Natural killer cell (primary cell): ENCODE measurements at regions of chrX and their contacts with region 1.

Region 1: GRCh38 chrX:51144852-51145442 is 187.7 kb upstream of the NUDT10 start:
- DNase-seq: peak in 1 of 2 donors; percentile 44
- ATAC-seq: peak in 1 of 3 donors; percentile 60
- H3K4me3 ChIP-seq: no peak overlapping the region
- H3K4me3 Mint-ChIP-seq: no peak overlapping the region
- H3K27ac ChIP-seq: no peak overlapping the region
- H3K27ac Mint-ChIP-seq: no peak overlapping the region
- H3K4me1 ChIP-seq: no peaks in the 10 kb centered on the region
- H3K4me1 Mint-ChIP-seq: no peaks in the 10 kb centered on the region
- H3K27me3 ChIP-seq: no peaks in the 10 kb centered on the region
- H3K27me3 Mint-ChIP-seq: peaks cover 0 to 61% of the 10 kb centered on the region in 2 donors
- CTCF ChIP-seq: peak; percentile 49

Region 2: DNA sequence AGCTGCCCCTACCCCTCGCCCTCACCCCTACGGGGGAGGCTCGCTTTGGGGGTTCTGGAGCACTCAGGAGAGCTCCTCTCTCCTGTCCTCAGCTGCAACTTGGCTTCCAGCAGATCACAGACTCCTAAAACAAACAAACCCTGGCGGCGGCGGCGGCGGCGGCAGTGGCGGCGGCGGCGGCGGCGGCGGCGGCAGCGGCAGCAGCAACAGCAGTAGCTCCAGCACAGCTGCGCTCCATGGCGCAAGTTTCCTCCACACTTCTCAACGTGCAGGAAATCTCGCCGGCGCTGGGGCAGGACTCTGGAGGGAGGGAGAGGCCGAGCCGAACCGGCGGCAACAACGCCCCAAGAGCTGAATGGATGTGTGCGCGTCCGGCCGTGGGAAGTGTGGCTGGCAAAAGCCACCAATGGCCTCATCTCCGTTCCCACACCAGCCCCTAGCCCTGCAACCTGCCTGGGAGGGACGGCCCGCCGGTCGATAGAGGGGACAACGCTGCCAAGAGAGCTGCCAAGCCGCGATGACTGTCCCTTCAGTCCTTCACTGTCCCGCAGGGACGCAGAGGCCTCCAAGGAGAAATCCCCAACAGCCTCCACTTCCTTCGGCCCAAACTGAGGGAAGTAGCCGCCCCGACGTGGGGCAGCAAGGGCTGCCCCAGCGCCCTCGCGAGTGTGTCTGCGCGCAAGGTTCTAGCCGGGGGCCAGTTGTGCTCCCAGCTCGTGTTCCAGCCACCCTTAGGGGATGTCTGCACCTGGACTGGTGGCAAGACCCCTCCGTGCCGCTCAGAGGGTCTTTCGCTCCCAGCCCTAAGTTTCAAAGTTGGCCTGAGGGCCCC is 331.7 kb before region 1 on chrX:
- intact Hi-C with region 1: no loop called
- DNase-seq: no peak
- ATAC-seq: no peak
- H3K4me3 ChIP-seq: no peak overlapping the region
- H3K4me3 Mint-ChIP-seq: no peak overlapping the region
- H3K27ac ChIP-seq: no peak overlapping the region
- H3K27ac Mint-ChIP-seq: no peak overlapping the region
- H3K4me1 ChIP-seq: peaks cover 13% of the 10 kb centered on the region
- H3K4me1 Mint-ChIP-seq: no peaks in the 10 kb centered on the region
- H3K27me3 ChIP-seq: no peaks in the 10 kb centered on the region
- H3K27me3 Mint-ChIP-seq: peaks cover 20 to 60% of the 10 kb centered on the region in 2 donors
- CTCF ChIP-seq: no peak

Region 3: DNA sequence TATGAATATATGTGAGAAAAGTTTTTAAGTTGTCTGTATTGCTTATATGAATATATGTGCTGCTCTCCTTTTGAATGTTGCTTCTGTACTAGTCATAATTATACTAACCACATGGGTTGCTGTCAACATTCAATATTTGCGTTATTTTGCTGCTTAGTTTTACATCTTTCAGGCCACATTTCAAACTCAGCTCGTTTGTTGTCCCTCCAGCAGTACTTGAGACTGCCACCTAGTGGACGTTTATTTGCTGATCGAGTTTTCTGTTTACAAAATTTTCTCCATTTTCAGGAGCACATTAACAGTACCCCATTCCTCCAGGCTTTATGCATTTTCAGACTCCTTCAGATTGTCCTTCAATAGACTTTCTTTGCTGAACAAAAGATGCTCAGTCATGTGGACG is 275.7 kb after region 1 on chrX:
- intact Hi-C with region 1: loop called (anchors 10 kb)
- DNase-seq: peak in 1 of 2 donors; percentile 71
- ATAC-seq: peak in 1 of 3 donors; percentile 48
- H3K4me3 ChIP-seq: no peak overlapping the region
- H3K4me3 Mint-ChIP-seq: no peak overlapping the region
- H3K27ac ChIP-seq: no peak overlapping the region
- H3K27ac Mint-ChIP-seq: no peak overlapping the region
- H3K4me1 ChIP-seq: no peaks in the 10 kb centered on the region
- H3K4me1 Mint-ChIP-seq: no peaks in the 10 kb centered on the region
- H3K27me3 ChIP-seq: no peaks in the 10 kb centered on the region
- H3K27me3 Mint-ChIP-seq: peaks cover 0 to 29% of the 10 kb centered on the region in 2 donors
- CTCF ChIP-seq: peak; percentile 54

Region 4: DNA sequence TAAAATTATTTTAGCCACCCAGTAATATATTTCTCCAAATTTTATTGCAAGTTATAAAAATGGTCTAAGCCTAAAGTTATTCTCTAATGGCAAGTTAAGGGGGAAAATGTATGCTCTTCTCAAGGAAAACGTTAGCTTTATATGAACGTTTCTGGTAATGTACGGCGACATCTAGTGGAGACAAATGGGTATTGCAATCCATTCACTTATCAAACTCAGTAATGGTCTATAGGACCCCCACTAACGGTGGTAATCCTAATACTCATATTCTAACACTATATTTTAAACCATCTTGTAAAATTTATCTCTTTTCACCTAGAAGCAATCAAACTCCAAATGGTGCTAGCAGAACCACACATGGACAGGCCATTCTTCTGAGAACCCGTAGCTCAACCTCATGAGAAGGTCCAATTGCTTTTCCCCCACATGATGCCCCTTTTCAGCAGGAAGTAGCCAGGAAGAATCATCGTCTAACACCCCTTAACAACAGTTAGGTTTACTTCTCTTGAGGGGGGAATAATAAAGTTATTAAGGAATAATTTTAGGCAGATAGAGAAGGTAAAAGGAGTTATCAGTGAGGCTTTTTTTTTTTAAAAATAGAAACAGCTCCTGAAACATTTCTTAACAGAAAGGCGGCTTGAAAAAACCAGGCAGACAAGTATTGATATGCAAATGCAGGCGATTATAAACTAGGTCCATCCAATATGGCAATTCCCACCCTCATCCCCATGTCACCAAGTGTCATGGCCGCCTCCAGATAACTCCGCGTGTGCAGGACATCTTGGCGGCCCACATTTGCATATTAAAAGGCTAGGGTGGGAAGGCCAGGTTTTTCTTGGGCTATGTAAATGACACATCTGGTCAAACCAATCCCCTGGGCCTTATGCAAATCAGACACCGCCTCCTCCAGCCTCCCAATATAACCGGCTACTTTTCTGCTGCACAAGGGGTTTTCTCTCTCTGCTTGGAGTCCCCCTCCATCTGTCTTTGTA is 316.4 kb after region 1 on chrX:
- intact Hi-C with region 1: loop called (anchors 5 kb)
- DNase-seq: peak in 1 of 2 donors; percentile 67
- ATAC-seq: peak in 1 of 3 donors; percentile 69
- H3K4me3 ChIP-seq: no peak overlapping the region
- H3K4me3 Mint-ChIP-seq: no peak overlapping the region
- H3K27ac ChIP-seq: no peak overlapping the region
- H3K27ac Mint-ChIP-seq: no peak overlapping the region
- H3K4me1 ChIP-seq: no peaks in the 10 kb centered on the region
- H3K4me1 Mint-ChIP-seq: no peaks in the 10 kb centered on the region
- H3K27me3 ChIP-seq: no peaks in the 10 kb centered on the region
- H3K27me3 Mint-ChIP-seq: peaks cover 5 to 34% of the 10 kb centered on the region in 2 donors
- CTCF ChIP-seq: peak; percentile 73